Ovary (tissue), 10 donors: ENCODE measurements at regions of chr4 and their contacts with region 1.

Region 1: GRCh38 chr4:4386736-4387392 is at the start of gene NSG1:
- DNase-seq: peak; percentile 42 to 76 (median 62)
- H3K4me3 ChIP-seq: peak within 1 kb of the TSS; percentile 49
- H3K27ac ChIP-seq: no peak within 1 kb of the TSS
- H3K4me1 ChIP-seq: peaks cover 5% of the 10 kb centered on the region
- H3K27me3 ChIP-seq: no peaks in the 10 kb centered on the region
- CTCF ChIP-seq: no peak
- EP300 ChIP-seq: no peak
- POLR2A ChIP-seq: no peak
- total RNA-seq, gene NSG1: 9.9 to 103 (median 39.6) TPM

Region 2: GRCh38 chr4:4344915-4345527 is 41.8 kb before region 1 on chr4:
- intact Hi-C with region 1: loop called in 1 of 4 experiments (anchors 5 kb)
- DNase-seq: peak in 1 of 5 donors; percentile 30
- H3K4me3 ChIP-seq: no peak overlapping the region
- H3K27ac ChIP-seq: no peak overlapping the region
- H3K4me1 ChIP-seq: peaks cover under 1% of the 10 kb centered on the region
- H3K27me3 ChIP-seq: no peaks in the 10 kb centered on the region
- CTCF ChIP-seq: no peak
- EP300 ChIP-seq: no peak
- POLR2A ChIP-seq: no peak